ENCODE measurements at regions of chr2 and their contacts with region 1.

Region 1: GRCh38 chr2:142961202-142961601 is 83.7 kb downstream of the KYNU start:
- DNase-seq: peak; percentile 29
- ATAC-seq: peak; percentile 97
- H3K4me3 ChIP-seq: no peak overlapping the region
- H3K27ac ChIP-seq: no peak overlapping the region
- H3K4me1 ChIP-seq: no peaks in the 10 kb centered on the region
- H3K27me3 ChIP-seq: no peaks in the 10 kb centered on the region
- CTCF ChIP-seq: no peak

Region 2: GRCh38 chr2:142974288-142975024 is 13.3 kb after region 1 on chr2:
- CTCF ChIA-PET with region 1: interaction called, 10 read pairs
- POLR2A ChIA-PET with region 1: no interaction called
- intact Hi-C with region 1: no loop called
- DNase-seq: peak; percentile 87
- ATAC-seq: peak; percentile 91
- H3K4me3 ChIP-seq: peak overlapping the region; percentile 30; the same call in 1 of the 2 replicates
- H3K27ac ChIP-seq: peak overlapping the region; percentile 77
- H3K4me1 ChIP-seq: peaks cover 28% of the 10 kb centered on the region
- H3K27me3 ChIP-seq: no peaks in the 10 kb centered on the region
- CTCF ChIP-seq: no peak